Esophagus muscularis mucosa (tissue), 4 donors: ENCODE measurements at regions of chr22 and their contacts with region 1.

Region 1: GRCh38 chr22:25110846-25111578 is 88.6 kb upstream of the CRYBB3 start:
- DNase-seq: no peak
- H3K4me3 ChIP-seq: peak overlapping the region; percentile 64 to 75 (median 72)
- H3K27ac ChIP-seq: peak overlapping the region; percentile 72 to 86 (median 80)
- H3K4me1 ChIP-seq: peaks cover 37 to 56% (median 53%) of the 10 kb centered on the region in 4 donors
- H3K27me3 ChIP-seq: no peaks in the 10 kb centered on the region
- CTCF ChIP-seq: peak; percentile 51 to 57 (median 53)
- EP300 ChIP-seq: no peak
- POLR2A ChIP-seq: no peak

Region 2: GRCh38 chr22:25172153-25172552 is 61.1 kb after region 1 on chr22:
- intact Hi-C with region 1: loop called (anchors 2 kb)
- DNase-seq: no peak
- H3K4me3 ChIP-seq: no peak overlapping the region
- H3K27ac ChIP-seq: no peak overlapping the region
- H3K4me1 ChIP-seq: peaks cover 0 to 7% (median 3%) of the 10 kb centered on the region in 4 donors
- H3K27me3 ChIP-seq: no peaks in the 10 kb centered on the region
- CTCF ChIP-seq: peak; percentile 52 to 70 (median 60)
- EP300 ChIP-seq: no peak
- POLR2A ChIP-seq: no peak